Activated CD4-positive, alpha-beta T cell treated with anti-CD3 and anti-CD28 coated beads, Interleukin-2, amount 10 ng/mL, durations not matched to agents 7 days and 5 days (primary cell): ENCODE measurements at regions of chr10 and their contacts with region 1.

Region 1: GRCh38 chr10:21953585-21954057 is 49.9 kb downstream of the DNAJC1 start:
- DNase-seq: no peak
- H3K4me3 Mint-ChIP-seq: no peak overlapping the region
- H3K27ac Mint-ChIP-seq: no peak overlapping the region
- H3K4me1 Mint-ChIP-seq: peaks cover 2% of the 10 kb centered on the region
- H3K27me3 Mint-ChIP-seq: no peaks in the 10 kb centered on the region

Region 2: DNA sequence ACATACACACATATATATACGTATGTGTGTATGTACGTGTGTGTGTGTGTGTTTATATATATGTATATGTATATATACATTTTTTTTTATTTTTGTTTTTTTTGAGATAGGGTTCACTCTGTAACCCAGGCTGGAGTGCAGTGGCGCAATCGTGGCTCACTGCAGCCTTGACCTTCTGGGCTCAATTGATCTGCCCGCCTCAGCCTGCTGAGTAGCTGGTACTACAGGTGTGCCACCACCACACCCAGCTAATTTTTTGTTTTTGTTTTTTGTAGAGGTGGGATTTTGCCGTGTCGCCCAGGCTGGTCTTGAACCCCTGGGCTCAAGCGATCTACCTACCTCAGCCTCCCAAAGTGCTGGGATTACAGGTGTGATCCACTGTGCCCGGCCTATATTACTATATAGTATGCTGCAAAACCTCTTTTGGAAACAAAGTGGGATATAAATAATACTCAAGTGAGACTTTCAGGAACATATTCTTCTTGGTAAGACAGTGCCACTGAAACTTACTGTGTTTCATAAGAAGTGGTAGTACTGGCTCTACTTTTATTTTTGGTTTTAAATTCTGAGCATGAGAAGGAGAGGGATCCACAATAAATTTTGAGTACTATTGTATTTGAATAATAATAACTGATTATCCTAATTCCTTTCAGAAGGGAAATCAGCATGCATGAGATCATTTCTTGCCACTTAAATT is 368.6 kb before region 1 on chr10:
- CTCF ChIA-PET with region 1: no interaction called
- POLR2A ChIA-PET with region 1: no interaction called
- DNase-seq: no peak
- H3K4me3 Mint-ChIP-seq: no peak overlapping the region
- H3K27ac Mint-ChIP-seq: no peak overlapping the region
- H3K4me1 Mint-ChIP-seq: peaks cover 37% of the 10 kb centered on the region
- H3K27me3 Mint-ChIP-seq: no peaks in the 10 kb centered on the region

Region 3: GRCh38 chr10:21924511-21924910 is 29.1 kb before region 1 on chr10:
- CTCF ChIA-PET with region 1: no interaction called
- POLR2A ChIA-PET with region 1: interaction called, 15 read pairs
- DNase-seq: no peak
- H3K4me3 Mint-ChIP-seq: no peak overlapping the region
- H3K27ac Mint-ChIP-seq: no peak overlapping the region
- H3K4me1 Mint-ChIP-seq: no peaks in the 10 kb centered on the region
- H3K27me3 Mint-ChIP-seq: no peaks in the 10 kb centered on the region